ENCODE measurements at regions of chr2 and their contacts with region 1.

Region 1: DNA sequence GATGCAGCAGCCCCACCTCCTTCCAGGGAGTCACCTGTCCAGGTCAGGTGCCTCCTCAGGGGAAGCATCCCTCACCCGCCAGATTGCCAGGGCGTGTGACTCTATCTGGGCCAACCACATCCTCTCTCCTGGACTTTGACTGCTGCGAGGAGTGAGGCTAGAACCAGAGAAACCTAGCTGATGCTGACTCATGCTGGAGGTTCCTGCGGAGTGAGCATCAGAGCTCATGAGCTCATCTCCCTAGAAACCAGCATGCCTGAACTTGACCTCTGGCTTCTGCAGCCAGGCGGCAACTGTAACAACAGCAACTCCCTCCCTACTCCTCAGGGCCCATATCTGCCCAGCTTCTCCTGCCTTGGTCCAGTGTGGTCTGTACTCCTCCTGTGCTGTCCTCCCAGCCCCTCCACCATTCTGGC is 28.3 kb upstream of the NT5DC4 start:
- DNase-seq: peak; percentile 73
- H3K4me3 Mint-ChIP-seq: peak overlapping the region; percentile 47
- H3K27ac Mint-ChIP-seq: peak overlapping the region; percentile 89
- H3K4me1 Mint-ChIP-seq: peaks cover 32% of the 10 kb centered on the region
- H3K27me3 Mint-ChIP-seq: no peaks in the 10 kb centered on the region

Region 2: DNA sequence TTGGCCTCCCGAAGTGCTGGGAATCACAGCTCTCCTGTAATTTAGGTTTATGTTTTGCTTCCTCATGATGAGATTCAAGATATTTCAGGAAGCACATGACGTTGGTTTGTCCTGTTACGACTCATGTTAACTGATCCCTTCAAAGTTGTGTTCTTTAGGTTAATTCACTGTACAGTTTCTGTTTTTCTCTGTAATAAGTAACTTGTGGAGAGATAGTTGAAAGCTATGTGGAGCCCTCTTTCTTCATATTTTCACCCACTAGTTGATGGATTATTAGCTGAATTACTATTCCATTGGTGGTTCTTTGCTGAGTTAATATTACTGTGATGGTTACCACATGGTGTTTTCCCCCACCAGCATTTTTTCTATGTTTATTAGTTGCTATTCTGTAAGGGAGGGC is 126.4 kb before region 1 on chr2:
- intact Hi-C with region 1: no loop called
- DNase-seq: no peak
- H3K4me3 Mint-ChIP-seq: no peak overlapping the region
- H3K27ac Mint-ChIP-seq: no peak overlapping the region
- H3K4me1 Mint-ChIP-seq: peaks cover 8% of the 10 kb centered on the region
- H3K27me3 Mint-ChIP-seq: no peaks in the 10 kb centered on the region

Region 3: DNA sequence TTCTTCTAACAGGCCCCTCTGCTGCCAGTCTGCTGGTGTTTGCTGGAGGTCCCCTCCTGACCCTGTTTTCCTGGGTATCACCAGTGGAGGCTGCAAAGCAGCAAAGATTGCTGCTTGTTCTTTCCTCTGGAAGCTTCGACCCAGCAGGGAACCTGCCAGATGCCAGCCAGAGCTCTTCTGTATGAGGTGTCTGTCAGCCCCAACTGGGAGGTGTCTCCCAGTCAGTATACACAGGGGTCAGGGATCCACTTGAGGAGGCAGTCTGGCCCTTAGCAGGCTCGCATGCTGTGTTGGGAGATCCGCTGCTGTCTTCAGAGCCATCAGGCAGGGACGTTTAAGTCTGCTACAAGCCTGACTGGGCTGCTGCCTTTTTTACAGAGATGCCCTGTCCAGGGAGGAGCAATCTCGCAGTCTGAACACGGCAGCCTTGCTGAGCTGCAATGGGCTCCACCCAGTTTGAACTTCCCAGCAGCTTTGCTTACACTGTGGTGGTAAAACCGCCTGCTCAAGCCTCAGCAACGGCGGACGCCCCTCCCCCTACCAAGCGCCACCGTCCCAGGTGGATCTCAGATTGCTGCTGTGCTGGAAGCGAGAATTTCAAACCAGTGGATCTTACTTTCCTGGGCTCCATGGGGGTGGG is 78.2 kb before region 1 on chr2:
- intact Hi-C with region 1: no loop called
- DNase-seq: no peak
- H3K4me3 Mint-ChIP-seq: no peak overlapping the region
- H3K27ac Mint-ChIP-seq: no peak overlapping the region
- H3K4me1 Mint-ChIP-seq: no peaks in the 10 kb centered on the region
- H3K27me3 Mint-ChIP-seq: peaks cover 37% of the 10 kb centered on the region

Region 4: GRCh38 chr2:112706170-112706664 is 13.7 kb after region 1 on chr2:
- intact Hi-C with region 1: loop called (anchors 1 kb)
- DNase-seq: peak; percentile 79
- H3K4me3 Mint-ChIP-seq: peak overlapping the region; percentile 79
- H3K27ac Mint-ChIP-seq: peak overlapping the region; percentile 93
- H3K4me1 Mint-ChIP-seq: peaks cover 72% of the 10 kb centered on the region
- H3K27me3 Mint-ChIP-seq: no peaks in the 10 kb centered on the region

Region 5: DNA sequence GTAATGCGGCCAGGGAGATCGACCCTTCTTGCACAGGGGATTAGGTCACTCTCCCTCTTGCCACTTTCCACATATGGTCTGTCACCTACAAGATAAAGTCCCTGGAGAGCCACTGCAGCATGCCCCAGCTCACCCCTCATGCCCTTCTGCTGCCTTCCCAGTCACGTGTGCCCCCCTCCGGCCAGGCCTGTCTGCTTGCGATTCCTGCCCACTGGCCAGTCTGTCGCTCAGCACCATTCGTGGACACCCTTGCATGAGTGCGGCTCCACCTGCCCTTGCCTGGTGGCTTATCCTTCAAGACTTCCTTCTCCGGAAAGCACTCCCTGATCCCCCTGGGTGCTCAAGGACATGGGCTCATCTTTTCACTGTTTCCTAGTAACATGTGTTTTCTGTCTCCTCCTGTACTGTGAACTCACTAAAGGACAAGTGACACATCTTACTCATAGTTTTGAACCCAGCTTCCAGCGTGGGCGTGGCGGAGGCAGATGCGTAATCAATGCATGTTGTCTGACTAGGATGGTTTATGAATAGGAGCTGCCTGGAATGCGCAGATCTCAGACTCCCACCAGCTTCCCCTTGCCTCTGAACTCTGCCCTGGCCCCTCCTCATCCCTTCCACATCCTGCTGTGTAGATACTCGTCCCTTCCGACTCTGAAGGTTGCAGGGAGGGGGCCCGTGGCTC is 20.5 kb after region 1 on chr2:
- intact Hi-C with region 1: loop called (anchors 1 kb)
- DNase-seq: no peak
- H3K4me3 Mint-ChIP-seq: peak overlapping the region; percentile 56
- H3K27ac Mint-ChIP-seq: peak overlapping the region; percentile 88
- H3K4me1 Mint-ChIP-seq: peaks cover 48% of the 10 kb centered on the region
- H3K27me3 Mint-ChIP-seq: peaks cover 10% of the 10 kb centered on the region

Region 6: DNA sequence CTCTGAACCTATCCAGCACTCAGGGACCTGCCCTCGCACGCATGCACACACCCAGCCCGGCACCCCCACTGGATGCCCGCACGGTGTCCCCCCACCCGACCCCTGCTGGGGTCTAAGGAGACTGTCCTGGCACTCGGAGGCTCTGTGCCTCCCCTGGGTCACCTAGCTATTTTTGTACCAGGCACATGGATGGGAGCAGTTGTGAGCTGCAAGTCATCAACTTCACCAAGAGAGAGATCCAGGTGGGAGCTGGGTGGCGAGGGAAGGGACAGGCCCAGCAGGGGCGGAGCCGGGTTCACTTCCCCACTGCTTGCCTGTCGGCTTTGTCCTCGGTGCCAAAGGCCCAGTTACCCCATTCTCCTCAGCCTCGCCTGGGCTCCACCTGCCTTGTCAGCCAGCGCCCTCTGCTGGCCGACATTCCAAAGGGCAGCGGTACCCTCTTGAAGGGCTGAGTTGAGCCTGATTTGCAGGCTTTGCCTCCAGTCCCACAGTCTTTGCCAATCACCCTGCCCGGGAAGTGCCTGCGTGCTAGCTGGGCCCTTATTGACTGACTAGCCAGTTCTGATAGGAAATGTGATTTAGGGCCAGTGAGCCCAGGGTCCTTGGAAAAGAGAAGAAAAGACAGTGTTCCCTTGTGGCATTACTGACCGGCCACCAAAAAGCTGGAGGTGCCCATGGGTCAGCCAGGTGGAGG is 34.1 kb after region 1 on chr2:
- intact Hi-C with region 1: loop called (anchors 1 kb)
- DNase-seq: peak; percentile 86
- H3K4me3 Mint-ChIP-seq: no peak overlapping the region
- H3K27ac Mint-ChIP-seq: no peak overlapping the region
- H3K4me1 Mint-ChIP-seq: peaks cover 16% of the 10 kb centered on the region
- H3K27me3 Mint-ChIP-seq: no peaks in the 10 kb centered on the region

Measured in activated T-helper 1 cell treated with anti-CD3 and anti-CD28 coated beads, Interleukin-12 subunit alpha, Interleukin-12 subunit beta, Interleukin-2, Interleukin-4 antibody, amounts not matched to agents 30 ng/mL and 10 ng/mL and 1 ng/mL, durations not matched to agents 14 hours and 24 hours and 36 hours (primary cell).